ENCODE measurements at regions of chr2 and their contacts with region 1.

Region 1: DNA sequence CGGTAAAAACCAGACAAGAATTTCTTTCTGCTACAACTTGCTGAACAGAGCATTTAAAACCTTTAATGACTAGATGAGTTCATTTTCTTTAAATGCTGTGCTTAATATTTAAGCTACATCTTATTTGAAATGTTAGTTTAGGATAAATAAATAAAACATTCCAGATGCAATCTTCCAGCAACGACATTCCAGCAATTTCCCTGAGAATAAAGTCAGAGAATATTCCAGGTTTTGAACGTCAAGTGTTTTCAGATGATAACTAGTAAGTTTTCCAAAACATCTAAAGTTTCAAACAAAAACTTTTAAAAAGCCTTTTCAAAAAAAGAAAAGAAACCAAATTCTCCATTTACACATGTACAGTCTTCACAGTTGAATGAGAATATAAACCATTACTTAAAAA is 104.8 kb downstream of the PPP1R1C start:
- DNase-seq: no peak
- H3K4me3 ChIP-seq: no peak overlapping the region
- H3K27ac ChIP-seq: no peak overlapping the region
- H3K4me1 ChIP-seq: no peaks in the 10 kb centered on the region
- H3K27me3 ChIP-seq: no peaks in the 10 kb centered on the region
- CTCF ChIP-seq: no peak
- POLR2A ChIP-seq: no peak

Region 2: GRCh38 chr2:182128791-182129707 is 38.6 kb after region 1 on chr2:
- intact Hi-C with region 1: loop called (anchors 2 kb)
- DNase-seq: no peak
- H3K4me3 ChIP-seq: no peak overlapping the region
- H3K27ac ChIP-seq: no peak overlapping the region
- H3K4me1 ChIP-seq: peaks cover 10% of the 10 kb centered on the region
- H3K27me3 ChIP-seq: no peaks in the 10 kb centered on the region
- CTCF ChIP-seq: no peak
- POLR2A ChIP-seq: no peak

Measured in vagina (tissue), 2 donors.